ENCODE measurements at regions of chr3 and their contacts with region 1.

Region 1: DNA sequence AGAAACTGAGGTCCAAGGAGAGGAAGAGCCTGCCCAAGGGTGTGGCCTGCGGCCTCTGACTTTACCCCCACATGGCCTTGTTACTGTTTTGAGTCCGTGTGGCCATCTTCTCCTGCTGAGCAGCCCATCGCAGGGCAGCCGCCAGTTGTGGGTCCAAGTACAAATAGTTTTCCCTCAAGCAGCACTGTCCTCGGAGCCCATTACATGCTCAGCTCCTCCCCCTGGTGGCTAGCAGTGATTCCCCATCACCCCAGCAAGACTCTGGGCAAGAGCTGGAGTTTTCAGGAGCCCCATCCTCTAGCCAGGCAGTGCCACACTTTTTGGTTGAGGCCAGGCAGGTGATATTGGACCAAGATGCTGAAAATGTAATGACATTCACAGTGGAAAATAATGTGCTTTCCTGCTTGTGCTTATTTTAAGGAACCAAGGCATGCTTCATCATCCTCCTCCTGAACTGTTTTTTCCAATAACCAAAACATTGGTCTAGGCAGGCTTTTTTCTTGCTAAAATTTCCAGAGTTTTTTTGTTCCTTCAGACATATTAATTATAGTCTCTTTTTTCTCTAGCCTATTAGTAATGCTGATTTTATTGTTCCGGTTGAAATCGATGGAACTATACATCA is 23.2 kb upstream of the VILL start:
- DNase-seq: peak; percentile 65
- H3K4me3 ChIP-seq: no peak overlapping the region
- H3K27ac ChIP-seq: no peak overlapping the region
- H3K4me1 ChIP-seq: peaks cover 7% of the 10 kb centered on the region
- H3K27me3 ChIP-seq: no peaks in the 10 kb centered on the region
- CTCF ChIP-seq: peak; percentile 85 to 92
- POLR2A ChIP-seq: no peak

Region 2: DNA sequence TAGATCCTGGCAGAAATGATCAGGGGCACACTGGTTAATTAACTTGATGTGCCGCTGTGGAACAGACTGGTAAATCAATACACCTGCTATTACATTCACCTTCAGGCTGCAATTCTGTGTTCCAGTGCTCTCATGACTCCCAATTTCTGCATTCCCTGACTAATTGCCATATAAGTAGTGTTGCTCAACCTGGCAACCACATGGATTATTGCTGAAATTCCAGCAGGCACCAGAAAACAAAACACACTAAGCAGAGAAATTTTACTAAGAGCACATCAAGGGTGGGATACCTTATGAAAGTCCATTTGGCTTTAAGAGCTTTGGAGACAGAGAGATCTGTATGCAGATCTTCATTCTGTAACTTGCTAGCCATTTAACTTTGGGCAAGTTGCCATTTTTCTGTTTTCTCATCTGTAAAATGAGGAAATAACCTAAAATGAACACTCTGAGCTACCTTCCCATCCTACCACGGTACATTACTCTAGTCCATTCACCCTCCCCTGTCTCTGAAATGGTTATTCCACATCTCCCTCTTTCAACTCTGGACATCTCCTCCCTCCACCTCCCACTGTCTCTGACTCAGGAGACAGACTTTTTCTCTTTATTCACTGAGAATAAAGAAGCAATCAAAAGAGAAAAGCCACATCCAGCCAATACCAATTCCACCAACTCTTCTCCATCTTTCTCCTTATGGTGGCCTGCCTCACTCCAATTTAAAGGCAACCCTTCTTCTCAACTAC is 1532.5 kb before region 1 on chr3:
- CTCF ChIA-PET with region 1: no interaction called
- POLR2A ChIA-PET with region 1: no interaction called
- dilution Hi-C with region 1: no loop called
- intact Hi-C with region 1: no loop called
- DNase-seq: no peak
- H3K4me3 ChIP-seq: no peak overlapping the region
- H3K27ac ChIP-seq: no peak overlapping the region
- H3K4me1 ChIP-seq: no peaks in the 10 kb centered on the region
- H3K27me3 ChIP-seq: no peaks in the 10 kb centered on the region
- CTCF ChIP-seq: no peak
- POLR2A ChIP-seq: no peak

Region 3: DNA sequence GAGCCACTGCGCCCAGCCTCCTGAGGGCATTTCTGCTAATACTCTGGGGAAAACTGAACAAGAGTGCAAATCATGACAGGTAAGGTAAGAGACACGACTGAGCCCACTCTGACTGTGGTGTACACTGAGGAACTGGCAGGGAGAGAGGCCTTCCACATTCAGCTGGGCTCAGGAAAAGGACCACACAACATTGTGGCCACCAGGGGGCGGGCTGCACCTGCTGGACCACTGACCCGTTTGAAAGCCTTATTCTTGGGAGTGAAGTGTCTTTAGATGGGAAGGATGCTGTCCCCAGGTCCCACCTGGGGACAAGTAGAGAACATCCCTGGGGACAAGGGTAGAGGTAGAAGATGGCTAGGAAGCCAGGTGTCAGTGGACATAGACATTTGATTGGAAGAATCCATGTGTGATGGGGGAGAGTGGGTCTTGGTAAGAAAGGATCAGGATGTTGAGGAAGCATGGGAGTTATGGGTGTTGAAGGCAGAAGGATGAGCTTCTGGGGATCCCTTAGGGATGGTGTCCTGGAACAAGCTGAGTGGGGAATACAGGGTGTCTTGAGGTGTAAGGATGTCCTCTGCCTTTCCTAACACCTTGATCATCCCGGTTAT is 111.9 kb before region 1 on chr3:
- CTCF ChIA-PET with region 1: no interaction called
- POLR2A ChIA-PET with region 1: interaction called, 5 read pairs
- dilution Hi-C with region 1: no loop called
- intact Hi-C with region 1: loop called (anchors 1 kb)
- DNase-seq: peak; percentile 77
- H3K4me3 ChIP-seq: no peak overlapping the region
- H3K27ac ChIP-seq: no peak overlapping the region
- H3K4me1 ChIP-seq: peaks cover 9% of the 10 kb centered on the region
- H3K27me3 ChIP-seq: no peaks in the 10 kb centered on the region
- CTCF ChIP-seq: peak; percentile 86 to 87
- POLR2A ChIP-seq: no peak

Region 4: GRCh38 chr3:37892927-37893600 is 74.3 kb before region 1 on chr3:
- CTCF ChIA-PET with region 1: interaction called, 16 read pairs
- POLR2A ChIA-PET with region 1: no interaction called
- dilution Hi-C with region 1: no loop called
- intact Hi-C with region 1: no loop called
- DNase-seq: peak; percentile 65
- H3K4me3 ChIP-seq: no peak overlapping the region
- H3K27ac ChIP-seq: no peak overlapping the region
- H3K4me1 ChIP-seq: peaks cover 16% of the 10 kb centered on the region
- H3K27me3 ChIP-seq: no peaks in the 10 kb centered on the region
- CTCF ChIP-seq: no peak
- POLR2A ChIP-seq: no peak

Region 5: GRCh38 chr3:37912052-37912733 is 55.2 kb before region 1 on chr3:
- CTCF ChIA-PET with region 1: interaction called, 8 read pairs
- POLR2A ChIA-PET with region 1: no interaction called
- dilution Hi-C with region 1: no loop called
- intact Hi-C with region 1: loop called (anchors 1 kb)
- DNase-seq: no peak
- H3K4me3 ChIP-seq: no peak overlapping the region
- H3K27ac ChIP-seq: no peak overlapping the region
- H3K4me1 ChIP-seq: peaks cover 13% of the 10 kb centered on the region
- H3K27me3 ChIP-seq: no peaks in the 10 kb centered on the region
- CTCF ChIP-seq: no peak
- POLR2A ChIP-seq: no peak

Region 6: DNA sequence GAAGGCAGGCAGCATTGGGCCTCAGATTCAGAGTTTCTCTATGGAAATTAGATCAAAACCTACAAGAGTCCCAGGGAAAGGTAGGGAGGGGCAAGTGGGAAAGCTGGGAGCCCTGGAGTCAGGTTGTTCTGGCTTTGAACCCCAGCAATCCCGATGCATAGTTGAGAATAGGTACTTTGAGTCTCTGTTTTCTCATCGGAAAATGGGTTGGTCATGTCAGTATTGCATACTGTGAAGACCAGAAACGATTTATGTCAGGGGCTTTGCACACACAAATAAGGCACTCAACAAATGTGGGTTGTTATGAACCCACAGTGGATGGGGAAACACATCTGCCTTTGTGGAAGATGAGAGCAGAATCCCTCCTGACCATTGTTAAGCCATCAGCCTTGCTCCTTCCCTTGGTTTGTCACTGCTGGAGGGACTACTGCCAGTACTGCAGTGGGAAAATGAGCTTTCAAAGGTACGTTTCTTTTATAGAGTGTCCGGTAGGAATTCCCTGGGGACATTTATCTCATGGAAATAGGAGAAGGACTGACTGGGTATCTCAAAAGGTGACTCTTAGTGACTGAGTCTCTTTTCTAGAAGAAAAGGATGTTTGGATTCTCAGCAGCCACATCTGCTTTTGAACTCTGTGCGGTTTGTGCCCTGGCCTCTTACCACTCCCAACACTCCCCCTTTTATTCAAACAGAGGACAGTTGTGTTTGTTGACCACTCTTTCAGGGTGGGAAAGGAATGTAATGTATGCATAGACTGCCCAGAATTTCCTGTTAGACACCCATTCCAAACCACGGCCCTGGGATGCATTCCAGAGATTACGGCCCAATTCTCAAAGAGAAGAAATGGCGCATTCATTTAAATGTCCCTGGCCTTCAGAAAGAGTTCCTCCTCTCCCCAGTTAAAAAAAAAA is 31.4 kb before region 1 on chr3:
- CTCF ChIA-PET with region 1: interaction called, 38 read pairs
- POLR2A ChIA-PET with region 1: no interaction called
- dilution Hi-C with region 1: no loop called
- intact Hi-C with region 1: no loop called
- DNase-seq: peak; percentile 81
- H3K4me3 ChIP-seq: no peak overlapping the region
- H3K27ac ChIP-seq: peak overlapping the region; percentile 81
- H3K4me1 ChIP-seq: peaks cover 26% of the 10 kb centered on the region
- H3K27me3 ChIP-seq: no peaks in the 10 kb centered on the region
- CTCF ChIP-seq: no peak
- POLR2A ChIP-seq: no peak

Region 7: GRCh38 chr3:37956723-37957528 is 10.4 kb before region 1 on chr3:
- CTCF ChIA-PET with region 1: interaction called, 57 read pairs
- POLR2A ChIA-PET with region 1: no interaction called
- dilution Hi-C with region 1: no loop called
- intact Hi-C with region 1: loop called (anchors 1 kb)
- DNase-seq: peak; percentile 84
- H3K4me3 ChIP-seq: no peak overlapping the region
- H3K27ac ChIP-seq: peak overlapping the region; percentile 41
- H3K4me1 ChIP-seq: peaks cover 40% of the 10 kb centered on the region
- H3K27me3 ChIP-seq: no peaks in the 10 kb centered on the region
- CTCF ChIP-seq: no peak
- POLR2A ChIP-seq: no peak

Region 8: DNA sequence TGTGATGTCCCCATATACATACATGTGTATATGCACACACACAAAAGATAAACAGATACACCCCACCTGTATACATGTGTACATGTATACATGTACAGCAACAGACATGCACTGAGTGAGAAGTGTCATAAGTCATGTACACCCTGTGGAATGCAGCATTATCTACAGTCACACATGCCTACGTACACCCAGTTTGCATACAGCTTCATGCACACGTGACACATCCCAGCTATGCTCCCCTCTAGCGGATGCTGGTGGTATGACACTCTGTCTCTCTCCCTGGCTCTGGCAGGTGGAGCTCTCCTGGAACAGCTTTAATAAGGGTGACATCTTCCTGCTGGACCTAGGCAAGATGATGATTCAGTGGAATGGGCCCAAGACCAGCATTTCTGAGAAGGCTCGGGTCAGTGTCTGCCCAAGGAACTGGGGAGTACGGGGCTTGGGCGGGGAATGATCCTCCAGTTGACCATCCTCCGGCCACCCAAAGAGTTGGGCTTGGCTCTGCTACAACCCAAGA is 29.5 kb after region 1 on chr3:
- CTCF ChIA-PET with region 1: interaction called, 20 read pairs
- POLR2A ChIA-PET with region 1: no interaction called
- dilution Hi-C with region 1: no loop called
- intact Hi-C with region 1: no loop called
- DNase-seq: peak; percentile 84
- H3K4me3 ChIP-seq: no peak overlapping the region
- H3K27ac ChIP-seq: no peak overlapping the region
- H3K4me1 ChIP-seq: peaks cover 15% of the 10 kb centered on the region
- H3K27me3 ChIP-seq: no peaks in the 10 kb centered on the region
- CTCF ChIP-seq: peak; percentile 90
- POLR2A ChIP-seq: no peak

Region 9: GRCh38 chr3:38446085-38446686 is 478.8 kb after region 1 on chr3:
- CTCF ChIA-PET with region 1: no interaction called
- POLR2A ChIA-PET with region 1: no interaction called
- dilution Hi-C with region 1: no loop called
- intact Hi-C with region 1: no loop called
- DNase-seq: no peak
- H3K4me3 ChIP-seq: no peak overlapping the region
- H3K27ac ChIP-seq: no peak overlapping the region
- H3K4me1 ChIP-seq: no peaks in the 10 kb centered on the region
- H3K27me3 ChIP-seq: no peaks in the 10 kb centered on the region
- CTCF ChIP-seq: no peak
- POLR2A ChIP-seq: no peak

Measured in endothelial cell of umbilical vein (primary cell).